ENCODE measurements at regions of chr9 and their contacts with region 1.

Region 1: DNA sequence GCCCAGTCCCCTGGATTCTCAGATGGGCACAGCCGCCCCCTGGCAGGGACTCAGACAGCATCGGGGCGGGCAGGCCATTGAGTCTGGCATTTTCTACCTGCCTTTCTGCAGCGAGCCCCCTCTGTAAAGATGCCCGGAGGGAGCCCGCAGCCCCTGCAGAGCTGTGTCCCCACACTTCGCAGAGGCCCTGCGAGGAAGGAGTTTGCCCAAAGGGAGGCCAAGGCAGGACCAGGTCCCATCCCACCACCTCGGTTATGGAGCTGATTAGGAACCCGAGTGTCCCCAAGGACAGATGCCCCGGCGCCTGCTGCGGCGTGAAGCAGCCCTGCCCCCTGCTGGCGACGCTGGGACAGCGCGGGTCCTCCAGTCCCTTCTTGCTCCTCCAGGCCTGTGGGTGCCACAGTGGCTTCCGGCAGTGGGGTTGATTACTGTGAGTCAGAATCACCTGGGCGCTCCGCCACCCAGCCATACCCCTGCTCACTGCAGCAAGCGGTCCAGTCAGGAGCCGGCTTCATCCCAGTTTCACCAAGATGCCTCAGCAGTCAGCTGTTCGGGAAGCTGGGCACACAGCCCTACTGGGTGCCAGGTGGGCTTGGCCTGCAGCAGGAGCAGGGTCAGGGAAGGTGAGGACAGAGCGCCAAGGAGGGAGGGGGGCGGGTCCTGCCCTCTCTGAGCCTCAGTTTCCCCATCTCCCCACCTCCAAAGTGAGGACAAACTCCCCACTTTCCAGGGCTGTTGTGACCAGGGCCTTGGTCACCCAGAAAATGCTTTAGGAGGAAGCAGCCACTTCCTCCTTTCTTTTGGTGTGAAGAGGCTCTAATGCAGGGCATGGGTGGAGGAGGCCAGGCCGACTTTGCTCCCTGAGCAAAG is 117.1 kb downstream of the RXRA start:
- DNase-seq: peak; percentile 94
- ATAC-seq: peak; percentile 100
- H3K4me3 Mint-ChIP-seq: no peak overlapping the region
- H3K27ac Mint-ChIP-seq: no peak overlapping the region
- H3K4me1 Mint-ChIP-seq: peaks cover 21% of the 10 kb centered on the region
- H3K27me3 Mint-ChIP-seq: peaks cover 9% of the 10 kb centered on the region

Region 2: DNA sequence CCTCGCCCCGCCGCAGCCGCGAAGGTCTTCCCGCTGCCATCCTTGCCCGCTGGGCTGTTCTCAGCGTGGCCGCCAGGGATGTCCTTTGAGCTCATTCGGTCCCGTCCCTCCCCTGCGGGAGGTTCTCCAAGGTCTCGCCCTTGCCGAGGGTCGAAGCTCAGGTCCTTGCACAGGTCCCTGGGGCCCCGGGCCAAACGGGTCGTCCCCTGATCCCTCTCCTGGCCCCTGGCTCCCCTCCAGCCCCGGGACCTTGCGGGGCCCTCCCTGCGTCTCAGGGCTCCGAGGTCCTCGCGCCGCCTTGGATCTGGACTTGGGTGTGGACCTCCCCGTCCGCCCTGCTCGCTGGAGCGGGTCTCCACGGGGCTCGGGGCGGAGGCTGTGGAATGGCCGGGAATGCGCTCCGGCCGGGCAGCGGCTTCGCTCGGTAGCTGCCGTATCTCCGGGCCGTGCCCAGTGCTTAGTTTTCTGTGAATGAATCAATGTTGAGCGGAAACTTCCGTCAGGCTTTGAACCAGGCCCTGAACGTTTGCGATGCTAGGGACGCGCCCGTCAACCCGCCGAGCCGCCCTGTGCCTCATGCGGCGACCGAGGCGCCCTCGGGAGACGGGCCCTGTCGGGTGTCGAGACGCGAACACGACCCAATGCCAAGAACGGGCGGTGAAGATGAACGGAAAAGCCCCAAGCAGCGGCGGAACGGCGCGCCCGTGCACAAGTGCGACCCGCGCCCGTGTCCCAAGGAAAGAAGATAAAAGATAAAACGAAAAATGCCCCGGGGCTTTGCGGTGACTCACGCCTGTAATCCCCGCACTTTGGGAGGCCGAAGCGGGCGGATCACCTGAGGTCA is 279.8 kb before region 1 on chr9:
- CTCF ChIA-PET with region 1: interaction called, 26 read pairs
- POLR2A ChIA-PET with region 1: no interaction called
- intact Hi-C with region 1: loop called in 1 of 2 experiments (anchors 1 kb)
- DNase-seq: peak; percentile 83
- ATAC-seq: peak; percentile 39
- H3K4me3 Mint-ChIP-seq: no peak overlapping the region
- H3K27ac Mint-ChIP-seq: no peak overlapping the region
- H3K4me1 Mint-ChIP-seq: peaks cover 2% of the 10 kb centered on the region
- H3K27me3 Mint-ChIP-seq: no peaks in the 10 kb centered on the region

Region 3: GRCh38 chr9:134171316-134172197 is 271.8 kb before region 1 on chr9:
- CTCF ChIA-PET with region 1: interaction called, 26 read pairs
- POLR2A ChIA-PET with region 1: no interaction called
- intact Hi-C with region 1: loop called (anchors 1 kb)
- DNase-seq: no peak
- ATAC-seq: no peak
- H3K4me3 Mint-ChIP-seq: no peak overlapping the region
- H3K27ac Mint-ChIP-seq: no peak overlapping the region
- H3K4me1 Mint-ChIP-seq: no peaks in the 10 kb centered on the region
- H3K27me3 Mint-ChIP-seq: no peaks in the 10 kb centered on the region

Region 4: DNA sequence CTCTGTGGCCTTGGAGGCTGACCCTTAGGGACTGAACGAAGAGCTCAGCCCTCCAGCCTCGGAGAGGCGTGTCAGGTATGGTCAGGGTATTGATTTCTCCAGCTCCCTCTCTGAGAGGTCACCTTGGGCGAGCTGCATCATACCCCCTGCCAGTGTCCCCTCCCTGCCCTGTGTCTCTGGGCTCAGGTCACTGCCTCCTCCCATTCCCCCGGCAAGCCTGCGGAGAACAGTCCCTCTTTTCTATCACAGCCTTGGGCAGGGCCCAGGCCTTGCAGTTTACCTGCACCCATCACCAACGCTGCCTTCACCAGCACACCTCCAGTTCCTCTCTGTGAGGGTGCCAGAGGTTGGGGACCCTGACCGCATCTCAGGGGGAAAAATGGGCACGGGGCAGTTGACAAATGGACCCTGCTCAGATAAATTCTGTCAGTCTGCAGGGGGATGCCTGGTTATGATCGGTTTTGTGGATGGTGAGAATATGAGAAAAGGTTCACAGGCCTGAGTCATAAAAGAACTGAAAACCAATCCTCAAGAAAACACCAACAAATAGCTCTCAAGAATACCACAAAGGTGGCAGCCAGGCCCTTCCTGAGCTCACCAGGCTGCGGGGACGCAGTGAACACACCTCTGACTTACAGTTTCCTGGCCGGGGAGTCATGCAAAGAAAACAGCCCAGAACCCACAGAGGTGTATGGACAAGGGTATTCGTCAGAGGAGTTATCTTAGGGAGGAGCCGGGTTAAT is 141.8 kb before region 1 on chr9:
- CTCF ChIA-PET with region 1: no interaction called
- POLR2A ChIA-PET with region 1: no interaction called
- intact Hi-C with region 1: loop called in 1 of 2 experiments (anchors 1 kb)
- DNase-seq: peak; percentile 82
- ATAC-seq: peak; percentile 99
- H3K4me3 Mint-ChIP-seq: no peak overlapping the region
- H3K27ac Mint-ChIP-seq: no peak overlapping the region
- H3K4me1 Mint-ChIP-seq: peaks cover 10% of the 10 kb centered on the region
- H3K27me3 Mint-ChIP-seq: peaks cover 1% of the 10 kb centered on the region

Region 5: DNA sequence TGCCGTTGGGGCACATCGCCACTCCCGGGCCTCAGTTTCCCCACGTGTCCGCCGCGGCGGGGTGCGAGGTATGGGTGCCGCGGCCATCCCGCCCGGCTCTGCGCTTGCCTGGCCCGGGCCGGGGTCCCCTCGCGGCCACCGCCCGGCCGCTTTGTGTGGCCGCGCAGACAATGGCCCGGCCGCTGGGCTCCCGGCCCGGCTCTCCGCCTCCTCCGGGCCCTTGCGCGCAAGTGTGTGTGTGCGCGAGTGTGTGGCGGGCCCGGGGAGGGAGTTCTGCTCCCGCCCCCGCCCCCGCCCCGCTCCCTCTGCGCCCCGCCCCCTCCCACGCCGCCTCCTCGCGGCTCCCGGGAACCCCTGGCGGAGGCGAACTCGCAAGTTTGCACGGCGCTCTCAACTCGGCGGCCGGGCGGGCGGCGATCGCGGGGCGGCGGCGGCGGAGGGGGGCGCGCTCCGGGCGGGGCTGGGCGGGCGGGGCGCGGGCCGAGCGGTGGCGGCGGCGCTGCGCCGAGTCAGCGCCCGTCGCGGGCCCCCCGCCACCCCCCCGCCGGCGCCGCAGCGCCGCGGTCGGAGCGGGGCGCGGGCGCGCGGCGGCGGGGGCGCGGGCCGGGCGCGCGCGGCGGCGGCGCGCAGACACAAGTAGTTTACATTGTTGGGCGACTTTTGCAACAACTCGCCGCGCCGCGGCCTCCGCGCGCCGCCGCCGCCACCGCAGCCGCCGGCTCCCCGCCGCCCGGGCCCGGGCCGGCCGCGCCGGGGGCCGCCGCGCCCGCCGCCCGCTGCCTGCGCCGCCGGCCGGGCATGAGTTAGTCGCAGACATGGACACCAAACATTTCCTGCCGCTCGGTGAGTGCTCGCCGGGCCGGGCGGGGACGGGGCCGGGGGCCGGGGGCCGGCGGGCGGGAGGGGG is 117.3 kb before region 1 on chr9 and contains the start of gene RXRA:
- CTCF ChIA-PET with region 1: interaction called, 3 read pairs
- POLR2A ChIA-PET with region 1: no interaction called
- intact Hi-C with region 1: loop called in 1 of 2 experiments (anchors 1 kb)
- DNase-seq: peak; percentile 68
- ATAC-seq: peak; percentile 48
- H3K4me3 Mint-ChIP-seq: peak within 1 kb of the TSS; percentile 55
- H3K27ac Mint-ChIP-seq: no peak within 1 kb of the TSS
- H3K4me1 Mint-ChIP-seq: peaks cover 3% of the 10 kb centered on the region
- H3K27me3 Mint-ChIP-seq: peaks cover 5% of the 10 kb centered on the region
- total RNA-seq, gene RXRA: 17.6 to 20.9 TPM

Region 6: DNA sequence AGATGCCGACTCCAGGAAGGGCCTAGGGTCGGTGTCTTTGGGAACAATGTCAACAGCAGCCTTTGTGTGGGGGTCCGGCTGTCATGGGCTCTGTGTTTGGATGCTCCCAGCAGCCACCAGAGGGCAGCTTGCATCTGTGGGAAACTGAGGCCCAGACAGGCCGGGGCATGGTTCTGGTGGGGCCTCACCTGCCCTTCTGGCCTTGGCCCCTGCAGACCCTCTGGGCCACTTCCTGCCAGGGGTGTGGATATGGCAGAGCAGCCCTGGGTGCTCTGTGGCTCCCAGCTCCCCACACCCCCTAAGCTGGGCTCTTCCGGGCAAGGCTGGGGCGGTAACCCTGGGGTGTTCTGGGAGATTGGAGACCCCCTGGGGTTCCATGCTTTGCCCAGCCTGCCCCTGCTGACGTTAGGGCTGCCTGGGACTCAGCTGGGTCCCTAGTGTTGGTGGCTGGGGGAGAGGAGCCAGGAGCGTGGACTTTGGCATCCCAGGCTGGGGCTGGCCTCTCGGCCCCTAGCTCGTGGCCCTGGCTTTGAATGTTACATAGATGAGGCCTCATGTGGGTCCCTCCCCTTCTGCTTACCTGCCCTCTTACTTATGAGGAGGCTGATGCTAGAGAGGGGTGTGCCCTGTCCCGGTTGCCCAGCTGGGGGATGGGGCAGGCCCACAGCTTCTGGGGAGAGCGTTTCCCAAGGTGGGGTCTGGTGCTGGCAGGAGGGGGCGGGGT is 78.8 kb before region 1 on chr9:
- CTCF ChIA-PET with region 1: interaction called, 4 read pairs
- POLR2A ChIA-PET with region 1: no interaction called
- intact Hi-C with region 1: loop called (anchors 1 kb)
- DNase-seq: peak; percentile 42
- ATAC-seq: peak; percentile 45
- H3K4me3 Mint-ChIP-seq: no peak overlapping the region
- H3K27ac Mint-ChIP-seq: no peak overlapping the region
- H3K4me1 Mint-ChIP-seq: no peaks in the 10 kb centered on the region
- H3K27me3 Mint-ChIP-seq: no peaks in the 10 kb centered on the region

Region 7: GRCh38 chr9:134670042-134670525 is 226.7 kb after region 1 on chr9:
- CTCF ChIA-PET with region 1: no interaction called
- POLR2A ChIA-PET with region 1: no interaction called
- intact Hi-C with region 1: no loop called
- DNase-seq: no peak
- ATAC-seq: no peak
- H3K4me3 Mint-ChIP-seq: no peak overlapping the region
- H3K27ac Mint-ChIP-seq: no peak overlapping the region
- H3K4me1 Mint-ChIP-seq: no peaks in the 10 kb centered on the region
- H3K27me3 Mint-ChIP-seq: peaks cover 4% of the 10 kb centered on the region